Activated CD4-positive, alpha-beta T cell treated with anti-CD3 and anti-CD28 coated beads, Interleukin-2, amount 10 ng/mL, durations not matched to agents 24 days and 14 days (primary cell): ENCODE measurements at regions of chr14 and their contacts with region 1.

Region 1: DNA sequence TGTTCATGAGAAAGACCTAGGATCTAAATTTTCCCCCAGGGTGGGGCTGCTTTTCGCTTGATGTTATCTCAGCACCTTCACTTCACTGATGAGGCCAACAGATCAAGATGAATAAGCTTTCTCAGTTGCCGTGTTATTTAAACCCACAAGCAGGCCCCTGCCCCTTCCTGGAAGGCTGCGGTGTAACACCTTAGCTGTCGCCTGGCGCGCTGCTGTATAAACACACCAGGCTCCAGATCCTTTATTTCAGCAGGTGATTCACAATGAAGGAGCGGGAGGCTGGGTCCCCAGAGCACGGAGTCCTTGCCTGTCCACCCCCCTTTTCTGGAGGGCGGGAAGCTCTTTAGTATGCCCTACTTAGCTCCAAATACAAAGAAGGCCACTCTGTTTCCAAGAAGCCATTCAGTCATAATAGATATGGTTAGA is 515.4 kb downstream of the FUT8 start:
- DNase-seq: peak; percentile 95
- H3K4me3 Mint-ChIP-seq: peak overlapping the region; percentile 58
- H3K27ac Mint-ChIP-seq: peak overlapping the region; percentile 91
- H3K4me1 Mint-ChIP-seq: peaks cover 60% of the 10 kb centered on the region
- H3K27me3 Mint-ChIP-seq: no peaks in the 10 kb centered on the region

Region 2: DNA sequence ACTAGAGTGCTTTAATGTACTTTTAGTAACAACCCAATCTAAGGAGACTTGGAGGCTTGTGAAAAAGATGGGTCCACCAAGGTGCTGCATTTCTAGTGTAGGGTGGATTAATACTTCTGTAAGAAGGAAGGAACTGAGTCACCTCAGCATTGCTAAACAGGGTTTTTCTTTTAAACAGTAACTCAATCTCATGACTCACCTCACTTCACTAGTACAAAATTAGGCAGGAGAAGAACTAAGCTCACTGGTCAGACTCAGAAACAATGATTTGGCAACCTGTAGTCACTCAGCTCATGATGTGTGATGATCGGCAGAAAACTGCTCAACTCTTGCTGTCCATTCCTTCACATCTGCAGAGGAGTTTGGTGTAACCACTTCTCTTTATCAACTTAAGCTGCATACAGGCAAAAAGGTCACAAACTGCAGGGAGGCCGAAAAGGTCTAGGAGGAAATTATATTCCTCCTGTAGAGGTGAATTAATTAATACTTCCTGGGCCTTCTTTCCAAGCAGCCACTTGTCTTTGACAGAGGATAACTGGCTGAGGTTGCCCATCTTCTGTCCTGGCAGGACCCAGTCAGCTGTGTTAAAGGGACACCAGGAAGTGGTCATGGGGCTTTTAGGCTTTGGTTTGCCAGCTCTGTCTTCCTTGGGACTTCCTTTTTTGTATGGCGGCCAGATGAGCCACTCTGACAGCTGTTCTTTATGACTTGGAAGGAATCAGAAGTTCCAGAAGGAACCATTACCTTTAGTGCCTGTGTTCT is 48.5 kb before region 1 on chr14:
- intact Hi-C with region 1: loop called (anchors 5 kb)
- DNase-seq: peak; percentile 64
- H3K4me3 Mint-ChIP-seq: peak overlapping the region; percentile 4
- H3K27ac Mint-ChIP-seq: peak overlapping the region; percentile 68
- H3K4me1 Mint-ChIP-seq: peaks cover 29% of the 10 kb centered on the region
- H3K27me3 Mint-ChIP-seq: no peaks in the 10 kb centered on the region

Region 3: GRCh38 chr14:65904988-65905387 is 23.0 kb before region 1 on chr14:
- intact Hi-C with region 1: no loop called
- DNase-seq: no peak
- H3K4me3 Mint-ChIP-seq: no peak overlapping the region
- H3K27ac Mint-ChIP-seq: no peak overlapping the region
- H3K4me1 Mint-ChIP-seq: peaks cover 17% of the 10 kb centered on the region
- H3K27me3 Mint-ChIP-seq: peaks cover 9% of the 10 kb centered on the region

Region 4: GRCh38 chr14:65915125-65915524 is 12.8 kb before region 1 on chr14:
- intact Hi-C with region 1: loop called (anchors 1 kb)
- DNase-seq: no peak
- H3K4me3 Mint-ChIP-seq: no peak overlapping the region
- H3K27ac Mint-ChIP-seq: no peak overlapping the region
- H3K4me1 Mint-ChIP-seq: peaks cover 33% of the 10 kb centered on the region
- H3K27me3 Mint-ChIP-seq: peaks cover 3% of the 10 kb centered on the region

Region 5: DNA sequence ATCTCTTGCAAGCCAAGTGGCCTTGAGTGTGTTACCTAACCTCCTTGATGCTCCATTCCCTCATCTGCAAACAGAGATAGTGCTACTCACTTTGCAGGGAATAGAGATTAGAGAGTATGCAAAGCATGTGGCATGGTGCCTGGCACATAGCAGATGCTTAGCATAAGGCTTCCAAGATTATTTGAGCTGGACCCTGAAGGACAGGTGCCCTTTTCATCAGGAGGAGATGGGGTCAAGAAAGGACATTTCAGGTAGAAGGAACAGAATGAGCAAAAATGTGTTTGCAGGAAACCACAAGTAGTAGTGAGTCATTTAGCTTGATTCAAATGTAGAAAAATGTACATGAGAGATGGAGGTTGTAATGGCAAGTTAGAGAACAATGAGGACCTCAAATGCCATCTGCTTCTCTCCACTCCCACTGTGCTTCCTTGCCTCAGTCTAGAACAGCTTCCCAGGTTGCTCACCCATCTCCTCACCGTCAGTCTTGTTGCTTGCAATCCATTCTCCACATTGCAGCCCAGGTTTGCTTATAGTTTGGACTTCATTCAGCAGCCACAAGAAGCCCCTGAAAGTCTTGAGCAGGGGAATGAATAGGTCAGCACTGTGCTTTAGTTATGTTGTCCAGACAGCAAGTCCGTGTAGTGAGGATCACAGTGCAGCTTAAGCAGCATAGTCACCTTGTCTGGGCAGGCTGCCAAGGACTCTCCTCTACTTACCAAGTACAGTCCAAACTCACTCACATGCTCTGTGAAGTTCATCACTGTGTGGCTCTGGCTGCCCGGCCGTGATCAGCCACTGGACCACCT is 22.0 kb after region 1 on chr14:
- intact Hi-C with region 1: loop called (anchors 1 kb)
- DNase-seq: peak; percentile 71
- H3K4me3 Mint-ChIP-seq: peak overlapping the region; percentile 14
- H3K27ac Mint-ChIP-seq: peak overlapping the region; percentile 82
- H3K4me1 Mint-ChIP-seq: peaks cover 40% of the 10 kb centered on the region
- H3K27me3 Mint-ChIP-seq: peaks cover 9% of the 10 kb centered on the region

Region 6: GRCh38 chr14:65958664-65959562 is 31.0 kb after region 1 on chr14:
- intact Hi-C with region 1: loop called (anchors 5 kb)
- DNase-seq: peak; percentile 63
- H3K4me3 Mint-ChIP-seq: no peak overlapping the region
- H3K27ac Mint-ChIP-seq: no peak overlapping the region
- H3K4me1 Mint-ChIP-seq: peaks cover 33% of the 10 kb centered on the region
- H3K27me3 Mint-ChIP-seq: peaks cover 19% of the 10 kb centered on the region